CD14-positive monocyte (primary cell): ENCODE measurements at regions of chr10 and their contacts with region 1.

Region 1: DNA sequence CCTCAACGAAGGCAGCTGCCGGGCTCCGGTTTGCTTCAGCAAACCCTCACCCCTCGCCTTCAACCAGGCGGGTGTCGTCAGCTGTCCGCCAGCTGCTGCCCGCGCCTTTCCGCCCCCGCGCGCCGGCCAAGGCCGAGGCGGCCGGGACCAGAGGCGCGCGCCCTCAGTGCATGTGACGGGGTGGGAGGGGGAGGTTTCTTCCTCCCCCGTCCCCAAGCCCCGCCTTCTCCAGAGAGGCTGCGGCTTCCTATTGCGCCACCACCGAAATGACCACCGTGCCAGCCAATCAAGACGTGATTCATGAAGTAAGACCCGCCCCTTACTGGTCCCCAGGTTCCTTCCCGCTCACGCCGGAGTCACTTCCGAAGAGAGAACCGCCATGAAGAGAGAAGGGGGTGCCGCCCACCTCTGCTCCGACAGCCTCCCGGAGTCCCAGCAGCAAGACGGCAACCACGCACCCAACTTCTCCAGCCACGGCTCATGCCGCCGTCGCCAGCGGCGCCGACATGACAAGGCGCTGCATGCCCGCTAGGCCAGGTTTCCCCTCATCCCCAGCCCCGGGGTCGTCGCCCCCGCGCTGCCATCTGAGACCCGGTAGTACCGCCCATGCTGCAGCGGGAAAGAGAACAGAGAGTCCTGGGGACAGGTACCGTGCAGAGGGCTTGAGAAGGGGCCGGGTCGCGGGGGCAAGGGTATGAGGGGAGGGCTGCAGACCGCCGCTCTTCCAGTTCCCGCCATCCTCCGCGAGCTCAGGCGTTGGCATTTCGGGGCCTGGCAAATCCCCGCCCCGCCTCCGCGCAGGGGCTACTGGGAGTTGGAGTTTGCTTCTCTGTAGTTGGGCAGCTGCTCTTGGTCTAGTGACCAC is at the start of gene SLF2:
- DNase-seq: peak; percentile 95 to 98 (median 97)
- H3K4me3 ChIP-seq: peak within 1 kb of the TSS; percentile 68 to 99 (median 79)
- H3K4me3 Mint-ChIP-seq: peak within 1 kb of the TSS; percentile 99
- H3K27ac ChIP-seq: peak within 1 kb of the TSS; percentile 47 to 85
- H3K27ac Mint-ChIP-seq: peak within 1 kb of the TSS; percentile 93 to 98 (median 96)
- H3K4me1 ChIP-seq: peaks cover 20 to 22% of the 10 kb centered on the region in 2 donors
- H3K4me1 Mint-ChIP-seq: peaks cover 31% of the 10 kb centered on the region
- H3K27me3 ChIP-seq: no peaks in the 10 kb centered on the region
- H3K27me3 Mint-ChIP-seq: peaks cover 0 to 4% (median 0%) of the 10 kb centered on the region in 3 donors
- CTCF ChIP-seq: no peak
- polyA plus RNA-seq, gene SLF2: 5.8 to 11.3 (median 6.4) TPM

Region 2: GRCh38 chr10:100986952-100987750 is 74.3 kb after region 1 on chr10 and contains the starts of genes MRPL43 and TWNK:
- intact Hi-C with region 1: loop called (anchors 5 to 10 kb)
- DNase-seq: peak; percentile 72 to 83 (median 78)
- H3K4me3 ChIP-seq: peak within 1 kb of the TSS; percentile 85 to 99 (median 98)
- H3K4me3 Mint-ChIP-seq: peak within 1 kb of the TSS; percentile 96 to 98
- H3K27ac ChIP-seq: peak within 1 kb of the TSS; percentile 34 to 77
- H3K27ac Mint-ChIP-seq: peak within 1 kb of the TSS; percentile 76 to 92 (median 89)
- H3K4me1 ChIP-seq: peaks cover 16 to 24% of the 10 kb centered on the region in 2 donors
- H3K4me1 Mint-ChIP-seq: peaks cover 25% of the 10 kb centered on the region
- H3K27me3 ChIP-seq: no peaks in the 10 kb centered on the region
- H3K27me3 Mint-ChIP-seq: peaks cover 0 to 2% (median 2%) of the 10 kb centered on the region in 3 donors
- CTCF ChIP-seq: no peak
- polyA plus RNA-seq, gene MRPL43: 69.5 to 123 (median 98.0) TPM
- polyA plus RNA-seq, gene TWNK: 0.31 to 1.2 (median 0.69) TPM